CD8-positive, alpha-beta memory T cell (primary cell): ENCODE measurements at regions of chr1 and their contacts with region 1.

Region 1: DNA sequence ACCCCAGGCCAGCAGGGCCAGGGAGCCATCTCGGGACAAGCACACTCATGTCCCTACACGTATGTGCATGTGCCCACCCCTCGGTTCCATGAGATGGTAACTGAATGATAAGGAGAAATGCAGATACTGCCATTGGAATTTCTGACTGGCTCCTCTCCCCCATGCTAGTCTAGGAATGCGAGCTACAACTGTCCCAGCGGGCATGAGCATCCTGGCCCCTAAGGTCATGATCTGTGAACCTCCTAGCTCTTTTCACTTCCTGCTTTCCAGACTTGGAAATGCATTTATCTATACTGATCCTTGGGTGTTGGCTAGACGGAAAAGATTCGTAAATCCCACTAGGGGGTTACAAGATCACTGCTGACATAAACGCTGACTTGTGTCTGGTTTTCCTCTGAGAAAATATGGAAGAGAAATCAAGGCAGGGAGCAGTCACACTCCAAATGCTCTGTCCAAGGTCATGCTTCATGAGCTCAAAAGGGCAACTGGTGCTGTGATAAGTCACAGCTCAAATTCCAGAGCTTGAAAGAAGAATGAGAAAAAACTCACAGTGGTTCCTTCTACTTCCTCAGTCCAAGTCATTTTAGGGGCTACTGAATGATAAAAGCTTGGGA is 49.8 kb downstream of the SLC45A1 start:
- DNase-seq: no peak
- H3K4me3 ChIP-seq: no peak overlapping the region
- H3K4me3 Mint-ChIP-seq: no peak overlapping the region
- H3K27ac ChIP-seq: no peak overlapping the region
- H3K27ac Mint-ChIP-seq: peak overlapping the region in 4 of 8 donors; percentile 6 to 37 (median 22)
- H3K4me1 ChIP-seq: peaks cover 9% of the 10 kb centered on the region
- H3K4me1 Mint-ChIP-seq: peaks cover 43 to 50% (median 48%) of the 10 kb centered on the region in 3 donors
- H3K27me3 ChIP-seq: no peaks in the 10 kb centered on the region
- H3K27me3 Mint-ChIP-seq: peaks cover 0 to 2% of the 10 kb centered on the region in 2 donors

Region 2: GRCh38 chr1:8252266-8252951 is 115.3 kb before region 1 on chr1:
- CTCF ChIA-PET with region 1: no interaction called
- POLR2A ChIA-PET with region 1: no interaction called
- DNase-seq: no peak
- H3K4me3 ChIP-seq: no peak overlapping the region
- H3K4me3 Mint-ChIP-seq: no peak overlapping the region
- H3K27ac ChIP-seq: no peak overlapping the region
- H3K27ac Mint-ChIP-seq: no peak overlapping the region
- H3K4me1 ChIP-seq: no peaks in the 10 kb centered on the region
- H3K4me1 Mint-ChIP-seq: peaks cover 6 to 15% (median 7%) of the 10 kb centered on the region in 3 donors
- H3K27me3 ChIP-seq: no peaks in the 10 kb centered on the region
- H3K27me3 Mint-ChIP-seq: peaks cover 2% of the 10 kb centered on the region in 2 donors

Region 3: GRCh38 chr1:8698012-8698630 is 330.4 kb after region 1 on chr1:
- CTCF ChIA-PET with region 1: no interaction called
- POLR2A ChIA-PET with region 1: no interaction called
- DNase-seq: no peak
- H3K4me3 ChIP-seq: no peak overlapping the region
- H3K4me3 Mint-ChIP-seq: no peak overlapping the region
- H3K27ac ChIP-seq: no peak overlapping the region
- H3K27ac Mint-ChIP-seq: no peak overlapping the region
- H3K4me1 ChIP-seq: peaks cover 27% of the 10 kb centered on the region
- H3K4me1 Mint-ChIP-seq: peaks cover 20 to 24% (median 23%) of the 10 kb centered on the region in 3 donors
- H3K27me3 ChIP-seq: peaks cover 8% of the 10 kb centered on the region
- H3K27me3 Mint-ChIP-seq: peaks cover 15 to 20% of the 10 kb centered on the region in 2 donors

Region 4: DNA sequence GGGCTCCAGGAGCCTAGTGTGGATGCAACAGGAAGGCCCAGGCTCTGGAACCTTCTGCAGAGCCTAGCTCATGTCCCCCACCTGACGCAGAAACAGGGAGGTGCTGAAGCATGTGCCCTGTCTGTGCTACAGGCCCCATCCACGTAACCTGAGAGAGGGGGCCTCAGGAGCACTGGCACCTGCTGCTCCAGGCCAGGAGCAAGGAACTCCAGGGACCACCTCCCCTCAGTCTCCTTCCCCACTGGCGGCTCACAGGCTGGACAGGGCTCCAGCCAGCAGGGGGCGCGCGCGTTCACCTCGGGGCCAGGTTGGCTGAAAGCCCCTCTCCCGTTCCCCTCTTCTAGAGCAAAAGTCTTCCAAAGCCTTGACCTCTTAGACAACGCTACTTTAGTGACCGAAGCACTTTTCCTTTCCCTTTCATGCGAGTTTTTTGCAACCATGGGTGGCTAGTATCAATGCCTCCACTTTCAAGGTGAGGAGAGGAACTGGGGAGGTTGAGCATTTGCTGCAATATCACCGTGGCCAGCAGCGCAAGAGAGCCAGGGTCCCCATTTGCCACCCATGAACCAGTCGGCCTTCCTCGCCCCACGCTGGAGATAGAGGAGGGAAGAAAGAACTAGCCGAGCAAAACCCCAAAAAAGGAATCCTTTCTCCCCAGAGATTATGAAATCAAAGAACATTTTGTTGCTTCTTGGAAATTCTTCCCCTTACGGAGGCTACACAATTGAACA is 813.7 kb after region 1 on chr1:
- CTCF ChIA-PET with region 1: no interaction called
- POLR2A ChIA-PET with region 1: interaction called, 13 read pairs
- DNase-seq: peak; percentile 34 to 69 (median 60)
- H3K4me3 ChIP-seq: peak overlapping the region; percentile 47
- H3K4me3 Mint-ChIP-seq: peak overlapping the region; percentile 54 to 82 (median 71)
- H3K27ac ChIP-seq: no peak overlapping the region
- H3K27ac Mint-ChIP-seq: peak overlapping the region in 1 of 8 donors; percentile 51
- H3K4me1 ChIP-seq: peaks cover 6% of the 10 kb centered on the region
- H3K4me1 Mint-ChIP-seq: peaks cover 6 to 8% (median 7%) of the 10 kb centered on the region in 3 donors
- H3K27me3 ChIP-seq: peaks cover 13% of the 10 kb centered on the region
- H3K27me3 Mint-ChIP-seq: peaks cover 18 to 43% of the 10 kb centered on the region in 2 donors